ENCODE measurements at regions of chr1 and their contacts with region 1.

Region 1: GRCh38 chr1:237791592-237791991 is 99.1 kb downstream of the ZP4 start:
- DNase-seq: no peak
- H3K4me3 ChIP-seq: no peak overlapping the region
- H3K4me3 Mint-ChIP-seq: no peak overlapping the region
- H3K27ac ChIP-seq: no peak overlapping the region
- H3K27ac Mint-ChIP-seq: no peak overlapping the region
- H3K4me1 ChIP-seq: no peaks in the 10 kb centered on the region
- H3K4me1 Mint-ChIP-seq: no peaks in the 10 kb centered on the region
- H3K27me3 ChIP-seq: no peaks in the 10 kb centered on the region
- H3K27me3 Mint-ChIP-seq: no peaks in the 10 kb centered on the region

Region 2: GRCh38 chr1:237327061-237327460 is 464.5 kb before region 1 on chr1:
- CTCF ChIA-PET with region 1: no interaction called
- POLR2A ChIA-PET with region 1: no interaction called
- intact Hi-C with region 1: no loop called
- DNase-seq: no peak
- H3K4me3 ChIP-seq: no peak overlapping the region
- H3K4me3 Mint-ChIP-seq: no peak overlapping the region
- H3K27ac ChIP-seq: no peak overlapping the region
- H3K27ac Mint-ChIP-seq: no peak overlapping the region
- H3K4me1 ChIP-seq: no peaks in the 10 kb centered on the region
- H3K4me1 Mint-ChIP-seq: no peaks in the 10 kb centered on the region
- H3K27me3 ChIP-seq: no peaks in the 10 kb centered on the region
- H3K27me3 Mint-ChIP-seq: no peaks in the 10 kb centered on the region

Region 3: DNA sequence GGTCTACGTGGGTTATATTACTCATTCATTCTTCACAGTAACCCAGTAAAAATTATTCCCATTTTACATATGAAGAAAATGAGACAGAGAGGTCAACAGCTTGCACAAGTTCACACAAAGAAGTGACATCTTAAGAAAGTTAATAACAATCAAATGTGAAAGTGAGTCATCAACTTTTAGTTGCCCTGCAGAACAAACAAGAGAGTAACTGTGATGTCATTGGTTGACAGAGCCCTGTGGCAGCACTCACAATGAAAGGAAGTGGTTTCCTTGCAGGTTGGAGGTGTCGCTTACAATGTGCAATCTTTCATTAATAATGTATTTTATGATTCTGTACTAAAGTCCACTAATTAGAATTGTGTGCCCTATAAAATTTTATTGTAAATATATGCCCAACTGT is 380.0 kb before region 1 on chr1:
- CTCF ChIA-PET with region 1: no interaction called
- POLR2A ChIA-PET with region 1: no interaction called
- intact Hi-C with region 1: no loop called
- DNase-seq: peak; percentile 22 to 53 (median 50)
- H3K4me3 ChIP-seq: no peak overlapping the region
- H3K4me3 Mint-ChIP-seq: peak overlapping the region in 4 of 8 donors; percentile 12 to 64 (median 42)
- H3K27ac ChIP-seq: no peak overlapping the region
- H3K27ac Mint-ChIP-seq: peak overlapping the region in 3 of 7 donors; percentile 37 to 81 (median 64)
- H3K4me1 ChIP-seq: peaks cover 6% of the 10 kb centered on the region
- H3K4me1 Mint-ChIP-seq: peaks cover 10 to 16% (median 12%) of the 10 kb centered on the region in 4 donors
- H3K27me3 ChIP-seq: no peaks in the 10 kb centered on the region
- H3K27me3 Mint-ChIP-seq: no peaks in the 10 kb centered on the region

Region 4: DNA sequence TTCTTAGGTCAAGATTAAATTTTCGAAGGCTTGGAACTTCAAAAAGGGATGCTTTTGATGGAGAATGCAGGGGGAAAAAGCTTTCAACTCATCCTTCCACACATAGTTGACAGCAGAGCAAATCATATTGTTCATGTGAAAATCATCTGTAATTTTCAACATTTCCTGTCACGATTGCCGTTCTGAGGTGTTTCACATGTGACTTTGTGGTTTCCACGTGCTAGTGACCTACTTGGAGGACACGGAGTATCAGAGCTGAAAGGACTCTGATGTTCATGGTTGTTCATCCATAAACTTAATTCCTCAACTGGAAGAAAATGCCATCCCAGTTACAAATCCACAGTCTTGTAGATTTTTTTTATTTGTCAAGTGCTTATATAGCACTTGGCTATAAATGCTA is 20.0 kb after region 1 on chr1:
- CTCF ChIA-PET with region 1: interaction called, 11 read pairs
- POLR2A ChIA-PET with region 1: no interaction called
- intact Hi-C with region 1: no loop called
- DNase-seq: no peak
- H3K4me3 ChIP-seq: no peak overlapping the region
- H3K4me3 Mint-ChIP-seq: no peak overlapping the region
- H3K27ac ChIP-seq: no peak overlapping the region
- H3K27ac Mint-ChIP-seq: no peak overlapping the region
- H3K4me1 ChIP-seq: no peaks in the 10 kb centered on the region
- H3K4me1 Mint-ChIP-seq: peaks cover 0 to 6% (median under 1%) of the 10 kb centered on the region in 4 donors
- H3K27me3 ChIP-seq: no peaks in the 10 kb centered on the region
- H3K27me3 Mint-ChIP-seq: peaks cover 0 to 3% of the 10 kb centered on the region in 2 donors

Measured in CD4-positive, alpha-beta memory T cell (primary cell).